ENCODE measurements at regions of chr15 and their contacts with region 1.

Region 1: DNA sequence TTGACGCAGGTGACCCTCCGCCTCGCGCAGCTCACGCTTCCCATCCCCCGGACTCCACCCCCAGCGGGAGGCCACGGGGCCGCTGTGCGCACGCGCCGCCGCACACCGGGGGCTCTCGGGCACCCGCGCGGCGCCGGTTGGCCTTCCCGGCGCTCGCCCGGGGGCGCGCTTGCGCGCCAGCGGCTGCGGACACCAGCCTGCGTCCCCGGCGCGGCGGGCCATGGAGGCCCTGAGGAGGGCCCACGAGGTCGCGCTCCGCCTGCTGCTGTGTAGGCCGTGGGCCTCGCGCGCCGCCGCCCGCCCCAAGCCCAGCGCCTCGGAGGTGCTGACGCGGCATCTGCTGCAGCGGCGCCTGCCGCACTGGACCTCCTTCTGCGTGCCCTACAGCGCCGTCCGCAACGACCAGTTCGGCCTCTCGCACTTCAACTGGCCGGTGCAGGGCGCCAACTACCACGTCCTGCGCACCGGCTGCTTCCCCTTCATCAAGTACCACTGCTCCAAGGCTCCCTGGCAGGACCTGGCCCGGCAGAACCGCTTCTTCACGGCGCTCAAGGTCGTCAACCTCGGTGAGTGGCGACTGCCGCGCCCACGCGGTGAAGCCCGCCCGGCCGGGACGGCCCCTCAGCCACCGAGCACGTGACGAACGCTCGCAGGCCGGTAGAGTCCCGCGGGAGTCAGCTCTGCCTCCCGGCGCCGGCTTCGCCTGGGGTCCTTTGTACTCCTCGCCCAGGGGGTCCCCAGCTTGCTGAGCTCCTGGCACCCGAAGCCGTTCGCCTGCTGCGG is at the start of gene C15orf61:
- DNase-seq: peak; percentile 86 to 89 (median 87)
- H3K4me3 ChIP-seq: peak within 1 kb of the TSS; percentile 64 to 93
- H3K4me3 Mint-ChIP-seq: peak within 1 kb of the TSS; percentile 90 to 96 (median 93)
- H3K27ac ChIP-seq: peak within 1 kb of the TSS; percentile 70
- H3K27ac Mint-ChIP-seq: peak within 1 kb of the TSS; percentile 93 to 97 (median 97)
- H3K4me1 ChIP-seq: peaks cover 33% of the 10 kb centered on the region
- H3K4me1 Mint-ChIP-seq: peaks cover 18 to 37% (median 26%) of the 10 kb centered on the region in 4 donors
- H3K27me3 ChIP-seq: no peaks in the 10 kb centered on the region
- H3K27me3 Mint-ChIP-seq: no peaks in the 10 kb centered on the region
- total RNA-seq, gene C15orf61: 9.5 to 13.4 TPM

Region 2: DNA sequence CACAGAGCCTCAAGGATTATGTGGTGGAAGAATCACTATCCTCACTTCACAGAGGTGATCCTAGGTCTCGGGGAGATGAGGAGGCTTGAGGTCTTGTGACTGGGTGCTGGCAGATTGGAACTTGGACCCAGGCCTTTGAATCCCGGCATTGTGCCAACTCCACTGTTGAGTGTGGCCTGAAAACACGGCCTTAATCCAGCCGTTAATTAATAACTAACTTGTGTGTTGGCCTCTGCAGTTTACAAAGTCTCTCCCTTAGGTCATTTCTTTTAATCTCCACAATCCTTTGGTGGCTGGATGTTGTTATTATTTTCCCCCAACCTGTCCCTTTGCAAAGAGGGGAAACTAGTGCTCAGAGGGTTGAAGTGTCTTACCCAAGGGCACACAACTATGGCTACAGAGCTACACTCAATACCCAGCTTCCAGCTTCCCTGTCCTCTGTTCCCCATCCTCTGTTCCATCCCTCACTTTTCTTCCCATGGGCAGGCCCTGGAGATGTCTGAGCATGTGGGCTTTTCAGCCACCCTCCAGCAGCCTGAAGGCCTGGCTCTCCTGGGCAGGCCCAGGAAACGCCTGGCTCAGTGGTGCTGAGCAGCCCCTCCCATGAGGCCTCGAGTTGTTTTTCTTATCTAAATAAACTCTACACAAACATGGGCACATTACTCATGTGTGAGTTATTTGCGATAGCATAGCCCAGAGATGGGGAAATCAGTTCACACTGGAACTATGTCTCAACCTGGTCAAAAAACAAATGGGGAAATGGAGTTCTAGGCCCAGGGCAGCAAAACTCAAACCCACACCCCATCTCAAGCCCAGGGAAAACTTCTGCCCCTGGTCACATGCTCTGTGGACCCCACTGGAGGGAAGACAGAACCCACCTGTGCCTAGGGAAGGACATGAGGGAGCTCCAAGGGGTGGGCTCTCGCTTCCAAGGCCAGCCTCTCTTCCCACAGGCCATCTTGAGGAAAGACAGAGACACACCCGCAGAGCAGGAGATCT is 472.6 kb before region 1 on chr15:
- CTCF ChIA-PET with region 1: no interaction called
- POLR2A ChIA-PET with region 1: no interaction called
- intact Hi-C with region 1: no loop called
- DNase-seq: no peak
- H3K4me3 ChIP-seq: no peak overlapping the region
- H3K4me3 Mint-ChIP-seq: no peak overlapping the region
- H3K27ac ChIP-seq: no peak overlapping the region
- H3K27ac Mint-ChIP-seq: peak overlapping the region in 1 of 7 donors; percentile 68
- H3K4me1 ChIP-seq: peaks cover 4% of the 10 kb centered on the region
- H3K4me1 Mint-ChIP-seq: peaks cover 5 to 12% (median 10%) of the 10 kb centered on the region in 4 donors
- H3K27me3 ChIP-seq: no peaks in the 10 kb centered on the region
- H3K27me3 Mint-ChIP-seq: no peaks in the 10 kb centered on the region

Region 3: DNA sequence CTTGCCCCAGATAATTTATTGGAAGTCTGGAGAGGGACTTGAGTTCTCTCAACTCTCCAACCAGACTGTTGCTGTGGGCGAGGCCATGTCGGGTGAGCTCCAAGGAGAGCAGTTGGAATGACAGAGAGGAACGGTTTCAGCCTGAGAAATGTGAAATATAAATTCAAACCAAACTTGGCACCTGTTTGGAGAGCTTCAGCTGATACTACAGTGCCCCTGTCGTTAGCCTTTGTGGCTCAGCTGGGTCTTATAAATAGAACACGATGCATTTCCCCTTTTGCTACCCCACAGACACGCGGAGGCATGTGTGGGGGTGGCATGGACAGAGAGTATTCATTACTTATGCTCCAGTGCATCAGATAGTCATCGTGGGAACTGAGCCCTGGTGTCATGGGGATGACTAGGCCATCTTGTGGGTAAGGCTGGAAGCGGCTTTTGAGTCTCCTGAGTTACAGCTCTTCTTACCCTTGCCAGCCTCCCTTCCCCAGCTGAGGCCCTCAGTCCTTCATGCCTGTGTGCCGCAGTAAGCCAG is 440.3 kb before region 1 on chr15:
- CTCF ChIA-PET with region 1: no interaction called
- POLR2A ChIA-PET with region 1: no interaction called
- intact Hi-C with region 1: no loop called
- DNase-seq: peak in 2 of 5 donors; percentile 32 to 71
- H3K4me3 ChIP-seq: no peak overlapping the region
- H3K4me3 Mint-ChIP-seq: peak overlapping the region in 7 of 8 donors; percentile 37 to 93 (median 72)
- H3K27ac ChIP-seq: peak overlapping the region; percentile 58
- H3K27ac Mint-ChIP-seq: peak overlapping the region; percentile 92 to 98 (median 95)
- H3K4me1 ChIP-seq: peaks cover 99% of the 10 kb centered on the region
- H3K4me1 Mint-ChIP-seq: peaks cover 79 to 98% (median 92%) of the 10 kb centered on the region in 4 donors
- H3K27me3 ChIP-seq: no peaks in the 10 kb centered on the region
- H3K27me3 Mint-ChIP-seq: no peaks in the 10 kb centered on the region

Region 4: GRCh38 chr15:67290319-67290718 is 230.9 kb before region 1 on chr15:
- CTCF ChIA-PET with region 1: no interaction called
- POLR2A ChIA-PET with region 1: no interaction called
- intact Hi-C with region 1: no loop called
- DNase-seq: no peak
- H3K4me3 ChIP-seq: no peak overlapping the region
- H3K4me3 Mint-ChIP-seq: no peak overlapping the region
- H3K27ac ChIP-seq: no peak overlapping the region
- H3K27ac Mint-ChIP-seq: no peak overlapping the region
- H3K4me1 ChIP-seq: no peaks in the 10 kb centered on the region
- H3K4me1 Mint-ChIP-seq: no peaks in the 10 kb centered on the region
- H3K27me3 ChIP-seq: no peaks in the 10 kb centered on the region
- H3K27me3 Mint-ChIP-seq: no peaks in the 10 kb centered on the region

Region 5: DNA sequence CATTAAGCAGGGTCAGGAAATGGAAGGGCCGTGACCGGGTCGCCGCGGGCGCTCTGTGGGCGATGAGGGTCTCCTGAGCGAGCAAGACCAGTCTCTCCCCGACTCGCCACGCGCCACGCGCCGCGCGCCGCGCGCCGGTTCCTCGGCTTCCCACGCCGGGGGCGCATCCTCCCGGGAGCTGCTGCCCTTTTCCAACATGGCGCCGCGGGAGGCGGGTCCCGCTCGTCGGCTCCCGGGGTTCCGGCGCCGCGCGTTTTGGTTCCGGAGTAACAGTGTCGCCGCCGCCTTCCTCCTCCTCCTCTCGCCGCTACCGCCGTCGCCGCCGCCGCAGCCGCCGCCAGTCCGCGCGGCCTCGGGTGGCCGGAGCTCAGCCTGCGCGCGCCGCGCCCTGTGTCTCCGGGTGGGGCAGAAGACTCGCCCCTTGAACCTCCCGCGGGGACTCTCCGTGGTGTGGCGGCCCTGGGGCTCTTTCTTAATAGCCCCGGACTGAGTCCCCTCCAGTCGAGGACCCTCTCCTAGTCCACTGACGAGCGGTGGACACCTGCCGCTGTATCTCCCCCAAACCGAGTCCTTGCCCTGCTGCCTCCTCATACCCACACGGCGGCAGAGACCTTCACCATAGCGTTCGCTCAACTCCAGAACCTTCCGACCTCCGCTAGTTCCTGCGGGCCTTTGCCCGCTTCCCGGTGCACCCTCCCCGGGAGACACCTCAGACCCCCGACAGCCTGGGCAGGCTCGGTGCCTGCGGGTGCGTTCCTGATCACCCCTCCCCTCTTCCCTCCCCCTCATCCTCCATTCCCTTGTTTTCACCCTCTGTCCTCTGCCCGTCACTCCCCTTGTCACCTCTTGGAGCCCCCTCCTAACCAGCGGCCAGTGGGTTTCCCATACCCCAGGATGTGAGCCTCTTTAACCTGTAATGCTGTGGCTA is 21.5 kb after region 1 on chr15 and contains the start of gene MAP2K5:
- CTCF ChIA-PET with region 1: interaction called, 3 read pairs
- POLR2A ChIA-PET with region 1: interaction called, 94 read pairs
- intact Hi-C with region 1: loop called (anchors 1 kb)
- DNase-seq: peak; percentile 75 to 84 (median 79)
- H3K4me3 ChIP-seq: peak within 1 kb of the TSS; percentile 67 to 81
- H3K4me3 Mint-ChIP-seq: peak within 1 kb of the TSS; percentile 94 to 98 (median 96)
- H3K27ac ChIP-seq: peak within 1 kb of the TSS; percentile 77
- H3K27ac Mint-ChIP-seq: peak within 1 kb of the TSS; percentile 90 to 100 (median 99)
- H3K4me1 ChIP-seq: peaks cover 49% of the 10 kb centered on the region
- H3K4me1 Mint-ChIP-seq: peaks cover 38 to 65% (median 51%) of the 10 kb centered on the region in 4 donors
- H3K27me3 ChIP-seq: no peaks in the 10 kb centered on the region
- H3K27me3 Mint-ChIP-seq: no peaks in the 10 kb centered on the region
- total RNA-seq, gene MAP2K5: 27.8 to 31.4 TPM

Region 6: GRCh38 chr15:68271854-68272471 is 750.7 kb after region 1 on chr15:
- CTCF ChIA-PET with region 1: no interaction called
- POLR2A ChIA-PET with region 1: no interaction called
- intact Hi-C with region 1: no loop called
- DNase-seq: no peak
- H3K4me3 ChIP-seq: no peak overlapping the region
- H3K4me3 Mint-ChIP-seq: no peak overlapping the region
- H3K27ac ChIP-seq: no peak overlapping the region
- H3K27ac Mint-ChIP-seq: no peak overlapping the region
- H3K4me1 ChIP-seq: peaks cover 8% of the 10 kb centered on the region
- H3K4me1 Mint-ChIP-seq: peaks cover 6 to 8% (median 8%) of the 10 kb centered on the region in 4 donors
- H3K27me3 ChIP-seq: no peaks in the 10 kb centered on the region
- H3K27me3 Mint-ChIP-seq: peaks cover 0 to 7% of the 10 kb centered on the region in 2 donors

Measured in CD4-positive, alpha-beta memory T cell (primary cell).